ENCODE measurements at regions of chr2 and their contacts with region 1.

Region 1: GRCh38 chr2:131413148-131413747 is 49.3 kb upstream of the RAB6D start:
- DNase-seq: peak; percentile 66
- H3K4me3 Mint-ChIP-seq: no peak overlapping the region
- H3K27ac Mint-ChIP-seq: no peak overlapping the region
- H3K4me1 Mint-ChIP-seq: peaks cover 6% of the 10 kb centered on the region
- H3K27me3 Mint-ChIP-seq: peaks cover 81% of the 10 kb centered on the region
- CTCF ChIP-seq: peak; percentile 82

Region 2: GRCh38 chr2:131425231-131425941 is 12.1 kb after region 1 on chr2:
- CTCF ChIA-PET with region 1: interaction called, 12 read pairs
- POLR2A ChIA-PET with region 1: no interaction called
- intact Hi-C with region 1: no loop called
- DNase-seq: no peak
- H3K4me3 Mint-ChIP-seq: no peak overlapping the region
- H3K27ac Mint-ChIP-seq: no peak overlapping the region
- H3K4me1 Mint-ChIP-seq: no peaks in the 10 kb centered on the region
- H3K27me3 Mint-ChIP-seq: peaks cover 59% of the 10 kb centered on the region
- CTCF ChIP-seq: no peak

Region 3: GRCh38 chr2:131492418-131493198 is 79.4 kb after region 1 on chr2:
- CTCF ChIA-PET with region 1: interaction called, 16 read pairs
- POLR2A ChIA-PET with region 1: interaction called, 3 read pairs
- intact Hi-C with region 1: loop called (anchors 10 kb)
- DNase-seq: peak; percentile 96
- H3K4me3 Mint-ChIP-seq: peak overlapping the region; percentile 92
- H3K27ac Mint-ChIP-seq: peak overlapping the region; percentile 94
- H3K4me1 Mint-ChIP-seq: peaks cover 12% of the 10 kb centered on the region
- H3K27me3 Mint-ChIP-seq: no peaks in the 10 kb centered on the region
- CTCF ChIP-seq: peak; percentile 67

Region 4: DNA sequence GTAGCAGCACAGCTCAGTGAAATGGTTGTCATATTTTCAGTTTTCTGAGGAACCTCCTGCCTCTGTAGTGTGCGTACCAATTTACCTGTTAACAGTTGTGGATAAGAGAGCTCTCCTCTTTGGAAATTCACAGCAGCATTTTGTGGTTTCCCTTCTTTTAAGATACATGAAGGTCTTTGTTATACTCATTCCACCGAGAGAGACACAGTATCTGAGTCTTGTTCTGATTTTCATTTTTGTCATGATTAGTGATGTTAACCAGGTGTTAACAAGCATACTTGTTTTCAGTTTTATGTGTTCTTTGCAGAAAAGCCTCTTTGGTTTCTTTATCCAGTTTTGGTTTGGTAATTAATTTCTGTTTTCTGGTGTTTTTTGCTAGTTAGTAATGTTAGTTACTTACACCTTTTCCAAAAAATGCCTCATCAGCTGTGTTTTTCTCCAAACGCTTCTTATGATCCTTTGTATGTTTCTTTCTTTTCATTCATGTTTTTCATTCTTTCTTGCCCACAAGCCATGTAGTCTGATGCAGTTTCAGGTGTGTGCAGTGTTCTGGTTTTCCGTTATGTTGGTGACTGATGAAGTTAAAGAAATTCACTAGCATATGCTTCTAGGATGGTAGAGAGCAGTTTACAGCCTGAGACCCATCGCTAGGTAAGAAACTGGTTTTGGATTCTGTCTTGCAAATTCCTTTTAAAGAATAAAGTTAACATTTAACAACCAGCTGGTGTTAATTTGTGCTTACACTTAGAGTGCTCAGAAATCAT is 144.5 kb after region 1 on chr2:
- CTCF ChIA-PET with region 1: no interaction called
- POLR2A ChIA-PET with region 1: no interaction called
- intact Hi-C with region 1: no loop called
- DNase-seq: no peak
- H3K4me3 Mint-ChIP-seq: no peak overlapping the region
- H3K27ac Mint-ChIP-seq: no peak overlapping the region
- H3K4me1 Mint-ChIP-seq: no peaks in the 10 kb centered on the region
- H3K27me3 Mint-ChIP-seq: peaks cover 81% of the 10 kb centered on the region
- CTCF ChIP-seq: no peak

Measured in MCF 10A (cell line).